Prostate gland (tissue), 2 donors: ENCODE measurements at regions of chr5 and their contacts with region 1.

Region 1: DNA sequence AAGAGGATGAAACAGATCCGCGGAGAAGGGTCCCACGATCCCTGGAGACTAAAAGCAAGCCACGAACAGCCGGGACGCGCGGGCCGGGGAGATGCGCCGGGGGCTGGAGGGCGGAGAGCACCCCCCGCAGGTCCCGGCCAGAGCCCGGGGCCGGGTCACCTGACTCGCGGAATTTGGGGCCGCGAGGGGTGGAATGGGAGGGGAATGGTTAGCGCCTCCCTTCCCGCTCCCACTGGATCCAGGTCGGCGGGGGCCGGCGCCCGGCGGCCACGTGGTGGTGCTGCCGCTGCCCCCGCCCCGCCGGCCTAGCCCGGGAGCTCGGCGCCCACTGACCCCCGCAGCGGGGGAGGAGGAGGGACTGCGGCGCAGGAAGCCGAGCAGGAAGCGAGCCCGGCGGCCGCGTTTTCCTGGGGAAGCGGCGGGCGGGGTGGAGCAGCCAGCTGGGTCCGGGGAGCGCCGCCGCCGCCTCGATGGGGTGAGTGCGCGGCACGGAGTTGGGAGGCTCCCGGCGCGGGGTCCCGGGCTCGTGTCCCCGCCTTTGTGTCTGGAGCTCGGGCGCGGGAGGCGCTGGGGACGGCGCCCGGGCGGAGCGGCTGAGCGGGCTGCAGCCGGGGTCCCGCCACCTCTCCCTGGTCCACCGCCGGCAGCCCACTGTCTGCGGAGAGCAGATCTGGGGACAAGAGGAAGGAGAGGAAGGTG is at the start of gene RAI14:
- DNase-seq: peak; percentile 76
- H3K4me3 ChIP-seq: peak within 1 kb of the TSS; percentile 52 to 80
- H3K27ac ChIP-seq: peak within 1 kb of the TSS; percentile 89 to 90
- H3K4me1 ChIP-seq: no peaks in the 10 kb centered on the region
- H3K27me3 ChIP-seq: no peaks in the 10 kb centered on the region
- CTCF ChIP-seq: peak in 1 of 4 experiments; percentile 18
- POLR2A ChIP-seq: peak; percentile 75
- total RNA-seq, gene RAI14: 9.6 to 23.7 TPM

Region 2: GRCh38 chr5:33601881-33602280 is 1054.3 kb before region 1 on chr5:
- intact Hi-C with region 1: no loop called
- DNase-seq: no peak
- H3K4me3 ChIP-seq: no peak overlapping the region
- H3K27ac ChIP-seq: no peak overlapping the region
- H3K4me1 ChIP-seq: no peaks in the 10 kb centered on the region
- H3K27me3 ChIP-seq: no peaks in the 10 kb centered on the region
- CTCF ChIP-seq: no peak
- POLR2A ChIP-seq: no peak

Region 3: DNA sequence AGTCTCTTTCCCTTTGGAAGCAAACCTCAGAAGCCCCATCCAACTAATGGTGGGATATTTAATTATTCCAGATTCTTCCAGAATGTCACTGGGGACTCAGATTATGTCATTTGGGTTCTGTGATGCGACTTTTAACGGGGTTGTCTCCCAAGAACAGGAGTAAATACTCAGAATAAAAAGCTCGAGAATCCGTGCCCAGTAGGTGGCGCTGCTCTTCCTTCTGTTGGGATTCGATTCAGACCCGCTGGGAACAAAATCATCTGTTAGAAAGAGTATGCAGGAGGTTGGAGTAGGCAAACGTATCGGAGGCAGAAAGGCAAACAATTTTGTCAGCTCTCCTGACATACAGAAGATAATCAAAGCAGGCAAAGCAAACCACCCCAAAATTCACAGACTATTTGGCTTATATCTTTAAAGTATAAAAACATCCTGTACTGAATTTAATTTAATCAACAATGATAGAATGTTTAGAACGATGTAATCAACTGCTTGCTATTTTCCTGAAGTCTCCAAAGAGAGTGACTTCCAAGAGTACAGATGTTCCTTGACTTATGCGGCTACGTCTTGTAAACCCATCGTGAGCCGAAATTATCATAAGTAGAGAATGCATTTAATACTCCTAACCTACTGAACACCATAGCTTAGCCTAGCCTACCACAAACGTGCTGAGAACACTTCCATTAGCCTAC is 169.8 kb before region 1 on chr5:
- intact Hi-C with region 1: loop called (anchors 5 kb)
- DNase-seq: peak; percentile 89
- H3K4me3 ChIP-seq: no peak overlapping the region
- H3K27ac ChIP-seq: peak overlapping the region; percentile 76 to 90
- H3K4me1 ChIP-seq: peaks cover 18% of the 10 kb centered on the region
- H3K27me3 ChIP-seq: no peaks in the 10 kb centered on the region
- CTCF ChIP-seq: peak; percentile 83 to 91 (median 85)
- POLR2A ChIP-seq: no peak

Region 4: DNA sequence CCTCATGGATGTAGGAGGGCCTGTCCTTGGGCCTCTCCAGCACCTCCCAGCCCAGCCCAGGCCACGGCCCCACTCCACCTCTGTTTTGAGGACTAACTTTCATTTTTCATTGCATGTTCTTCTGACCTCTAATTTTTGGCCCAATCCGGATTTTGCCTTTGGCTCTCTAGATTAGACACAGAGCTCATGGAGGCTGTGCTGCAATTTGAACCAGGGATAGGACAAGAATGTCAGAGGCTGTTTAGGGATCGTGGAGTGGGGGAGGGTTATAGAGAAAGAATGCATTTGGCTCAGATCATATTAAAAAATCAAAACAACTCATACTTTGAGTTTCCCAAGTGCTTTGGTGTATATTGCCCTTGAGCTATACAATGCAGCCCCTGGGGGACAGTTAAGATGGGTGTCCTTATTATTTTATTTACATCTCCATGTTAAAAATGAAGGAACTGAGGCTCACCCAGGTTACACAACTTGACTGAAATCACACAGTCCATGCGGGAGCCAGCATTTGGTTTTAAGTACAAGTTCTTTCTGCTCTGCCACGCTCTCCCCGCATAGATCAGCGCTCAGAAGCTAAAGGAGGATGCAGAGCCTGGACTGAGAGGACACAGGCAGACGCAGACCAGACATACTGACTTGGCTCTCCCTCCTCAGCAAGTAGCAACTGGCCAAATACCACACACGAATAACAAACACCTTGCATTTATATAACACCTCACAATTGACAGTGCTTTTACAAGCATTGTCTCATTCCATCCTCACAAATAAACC is 126.4 kb before region 1 on chr5:
- intact Hi-C with region 1: loop called (anchors 5 kb)
- DNase-seq: no peak
- H3K4me3 ChIP-seq: no peak overlapping the region
- H3K27ac ChIP-seq: no peak overlapping the region
- H3K4me1 ChIP-seq: no peaks in the 10 kb centered on the region
- H3K27me3 ChIP-seq: no peaks in the 10 kb centered on the region
- CTCF ChIP-seq: no peak
- POLR2A ChIP-seq: no peak

Region 5: GRCh38 chr5:34608859-34609648 is 47.1 kb before region 1 on chr5:
- intact Hi-C with region 1: loop called (anchors 2 kb)
- DNase-seq: peak; percentile 23
- H3K4me3 ChIP-seq: no peak overlapping the region
- H3K27ac ChIP-seq: no peak overlapping the region
- H3K4me1 ChIP-seq: no peaks in the 10 kb centered on the region
- H3K27me3 ChIP-seq: no peaks in the 10 kb centered on the region
- CTCF ChIP-seq: no peak
- POLR2A ChIP-seq: no peak

Region 6: GRCh38 chr5:34843497-34843896 is 187.3 kb after region 1 on chr5:
- intact Hi-C with region 1: loop called (anchors 5 kb)
- DNase-seq: no peak
- H3K4me3 ChIP-seq: no peak overlapping the region
- H3K27ac ChIP-seq: no peak overlapping the region
- H3K4me1 ChIP-seq: no peaks in the 10 kb centered on the region
- H3K27me3 ChIP-seq: no peaks in the 10 kb centered on the region
- CTCF ChIP-seq: no peak
- POLR2A ChIP-seq: no peak

Region 7: DNA sequence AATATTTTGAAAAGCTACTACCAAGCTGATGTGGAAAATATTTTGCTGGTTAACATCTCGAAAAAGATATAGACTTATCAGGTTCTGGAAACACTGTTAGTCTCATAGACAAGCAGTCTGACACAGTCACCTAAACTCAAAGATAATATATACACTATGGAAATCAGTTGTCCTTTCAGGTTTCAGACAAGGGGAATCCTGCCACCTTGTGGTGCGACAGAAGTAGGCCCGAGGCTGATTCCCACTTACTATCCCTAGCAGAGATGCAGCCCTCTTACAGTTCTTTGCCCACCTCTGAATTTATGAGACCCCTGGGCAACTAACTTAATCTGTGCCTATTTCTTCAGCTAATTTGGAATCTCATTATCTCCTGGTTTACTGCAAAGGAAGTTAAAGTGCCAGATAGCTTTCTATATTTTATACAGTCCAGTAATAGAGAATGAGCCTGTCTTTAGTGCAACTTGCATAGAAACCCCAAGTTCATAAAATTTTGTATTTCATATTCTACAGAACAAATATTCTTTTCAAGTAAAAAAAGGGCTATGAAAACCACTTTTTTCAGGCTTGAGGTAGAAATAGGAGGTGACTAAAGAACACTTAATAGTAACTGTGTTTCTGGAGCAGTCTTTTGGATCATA is 242.2 kb after region 1 on chr5:
- intact Hi-C with region 1: loop called (anchors 10 kb)
- DNase-seq: peak; percentile 71
- H3K4me3 ChIP-seq: no peak overlapping the region
- H3K27ac ChIP-seq: no peak overlapping the region
- H3K4me1 ChIP-seq: no peaks in the 10 kb centered on the region
- H3K27me3 ChIP-seq: no peaks in the 10 kb centered on the region
- CTCF ChIP-seq: peak; percentile 77 to 92 (median 84)
- POLR2A ChIP-seq: no peak

Region 8: DNA sequence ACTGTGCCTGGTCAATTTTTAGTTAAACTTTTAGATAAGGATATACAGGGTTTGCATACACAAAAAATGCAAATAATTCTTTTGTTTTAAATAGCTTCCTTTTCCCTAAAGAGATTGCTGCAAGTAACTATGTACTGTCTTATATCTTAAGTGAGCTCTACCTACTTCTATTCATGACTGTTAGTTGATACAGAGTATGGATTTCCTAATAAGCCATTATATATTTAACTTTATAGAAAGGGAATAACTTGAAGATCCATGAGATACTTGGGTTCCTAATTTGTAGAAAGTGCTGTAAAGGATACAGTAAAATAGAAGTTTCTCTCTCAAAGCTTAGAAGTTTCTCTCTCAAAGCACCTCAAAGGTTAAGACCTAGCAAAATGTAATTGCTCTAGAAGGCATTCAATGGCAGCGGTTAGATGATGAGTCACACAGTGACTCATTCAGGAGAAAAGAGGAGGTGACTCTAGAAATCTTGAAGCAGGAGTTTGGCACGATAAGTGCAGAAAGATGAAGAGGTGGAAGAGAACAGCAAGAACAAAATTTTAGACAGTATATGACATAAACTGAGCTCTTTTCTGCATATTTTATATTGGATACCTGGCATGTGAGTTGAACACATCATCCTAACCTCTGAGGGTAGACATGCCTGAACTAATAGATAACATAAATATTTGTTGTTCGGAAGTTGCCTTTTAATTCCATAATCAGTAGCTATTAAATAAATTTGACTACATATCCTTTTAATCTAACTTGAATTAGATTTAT is 267.7 kb after region 1 on chr5:
- intact Hi-C with region 1: no loop called
- DNase-seq: no peak
- H3K4me3 ChIP-seq: no peak overlapping the region
- H3K27ac ChIP-seq: no peak overlapping the region
- H3K4me1 ChIP-seq: peaks cover 3% of the 10 kb centered on the region
- H3K27me3 ChIP-seq: no peaks in the 10 kb centered on the region
- CTCF ChIP-seq: no peak
- POLR2A ChIP-seq: no peak